ENCODE measurements at regions of chr16 and their contacts with region 1.

Region 1: DNA sequence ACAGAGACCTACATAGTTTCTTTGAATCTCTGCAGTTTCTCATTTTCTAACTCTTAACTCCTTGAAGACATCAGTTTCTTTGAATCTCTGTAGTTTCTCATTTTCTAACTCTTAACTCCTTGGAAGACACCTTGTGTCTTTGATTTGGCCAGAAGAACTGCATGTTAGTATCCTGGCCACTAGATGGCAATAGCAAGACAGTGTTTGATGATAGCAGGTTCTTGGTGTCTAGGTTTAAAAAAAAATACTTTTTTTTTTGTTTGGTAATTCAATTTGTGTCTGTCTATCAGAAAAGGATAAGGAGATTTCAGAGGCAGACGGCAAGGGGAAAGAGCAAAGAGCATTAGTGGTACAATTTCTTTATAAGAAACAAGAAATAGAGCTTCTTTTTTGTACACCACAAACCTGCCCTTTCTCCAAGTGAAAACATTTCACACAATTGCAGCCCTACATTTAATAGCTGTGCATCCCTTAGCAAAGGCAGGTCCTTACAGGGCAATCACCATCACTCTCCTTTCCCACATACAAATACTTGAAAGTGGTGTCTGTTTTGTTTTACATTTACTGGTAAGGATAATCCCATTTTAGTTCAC is 1324.9 kb upstream of the CDH8 start:
- DNase-seq: peak; percentile 67
- H3K4me3 Mint-ChIP-seq: no peak overlapping the region
- H3K27ac Mint-ChIP-seq: no peak overlapping the region
- H3K4me1 Mint-ChIP-seq: peaks cover 6% of the 10 kb centered on the region
- H3K27me3 Mint-ChIP-seq: no peaks in the 10 kb centered on the region
- CTCF ChIP-seq: peak; percentile 71

Region 2: DNA sequence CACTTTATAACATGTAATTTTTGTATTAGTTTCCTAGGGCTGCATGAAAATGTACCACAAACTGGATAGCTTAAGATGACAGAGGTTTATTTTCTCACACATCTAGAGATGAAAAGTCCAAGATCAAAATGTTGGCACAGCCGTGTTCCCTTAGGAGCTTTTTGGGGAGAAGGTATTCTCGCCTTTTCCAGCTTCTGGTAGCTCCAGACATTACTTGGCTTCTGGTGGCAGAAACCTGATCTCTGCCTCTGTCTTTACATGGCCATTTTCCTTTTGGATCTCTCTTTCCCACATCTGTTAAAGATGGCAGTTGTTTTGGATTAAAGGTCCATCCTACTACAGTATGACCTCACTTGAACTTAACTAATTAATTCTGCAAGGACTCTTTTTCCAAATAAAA is 439.2 kb before region 1 on chr16:
- CTCF ChIA-PET with region 1: no interaction called
- POLR2A ChIA-PET with region 1: no interaction called
- intact Hi-C with region 1: no loop called
- DNase-seq: no peak
- H3K4me3 Mint-ChIP-seq: no peak overlapping the region
- H3K27ac Mint-ChIP-seq: no peak overlapping the region
- H3K4me1 Mint-ChIP-seq: no peaks in the 10 kb centered on the region
- H3K27me3 Mint-ChIP-seq: peaks cover 3% of the 10 kb centered on the region
- CTCF ChIP-seq: no peak

Region 3: GRCh38 chr16:64455254-64455653 is 1094.1 kb after region 1 on chr16:
- CTCF ChIA-PET with region 1: no interaction called
- POLR2A ChIA-PET with region 1: no interaction called
- intact Hi-C with region 1: loop called (anchors 1 kb)
- DNase-seq: peak; percentile 23
- H3K4me3 Mint-ChIP-seq: no peak overlapping the region
- H3K27ac Mint-ChIP-seq: no peak overlapping the region
- H3K4me1 Mint-ChIP-seq: peaks cover under 1% of the 10 kb centered on the region
- H3K27me3 Mint-ChIP-seq: no peaks in the 10 kb centered on the region
- CTCF ChIP-seq: peak; percentile 23

Measured in MCF 10A (cell line).